Right lobe of liver (tissue), 6 donors: ENCODE measurements at regions of chr9 and their contacts with region 1.

Region 1: GRCh38 chr9:105414947-105415661 is 32.7 kb upstream of the FSD1L start:
- DNase-seq: peak in 1 of 3 donors; percentile 59
- ATAC-seq: peak; percentile 29 to 59 (median 38)
- H3K4me3 ChIP-seq: no peak overlapping the region
- H3K27ac ChIP-seq: no peak overlapping the region
- H3K4me1 ChIP-seq: peaks cover 0 to 53% (median 10%) of the 10 kb centered on the region in 4 donors
- H3K27me3 ChIP-seq: no peaks in the 10 kb centered on the region
- CTCF ChIP-seq: peak; percentile 79 to 90 (median 86)
- POLR2A ChIP-seq: no peak

Region 2: DNA sequence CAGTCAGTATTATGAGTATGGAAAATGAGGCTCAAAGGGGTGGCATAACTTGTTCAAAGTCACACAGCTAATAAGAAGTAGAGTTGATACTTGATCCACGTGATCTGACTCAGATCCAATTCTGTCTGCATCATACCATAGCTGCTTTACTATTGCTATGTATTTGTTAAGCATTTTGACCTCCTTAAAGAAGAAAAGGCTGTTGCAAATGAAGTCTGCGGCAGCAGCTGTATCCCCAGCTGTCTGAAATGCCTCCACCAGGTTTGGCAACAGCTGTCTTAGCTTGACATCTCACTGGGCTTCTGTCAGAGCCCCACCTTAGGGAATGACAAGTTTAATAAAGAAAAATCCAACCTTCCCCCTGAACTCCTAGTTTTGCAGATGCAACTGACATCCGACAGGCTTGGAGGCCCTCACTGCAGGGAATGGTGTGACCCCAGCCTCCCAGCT is 246.2 kb before region 1 on chr9:
- intact Hi-C with region 1: loop called in 1 of 2 experiments (anchors 10 kb)
- DNase-seq: no peak
- ATAC-seq: no peak
- H3K4me3 ChIP-seq: no peak overlapping the region
- H3K27ac ChIP-seq: no peak overlapping the region
- H3K4me1 ChIP-seq: no peaks in the 10 kb centered on the region
- H3K27me3 ChIP-seq: no peaks in the 10 kb centered on the region
- CTCF ChIP-seq: no peak
- POLR2A ChIP-seq: no peak